ENCODE measurements at regions of chr6 and their contacts with region 1.

Region 1: GRCh38 chr6:24194978-24195700 is 69.1 kb downstream of the NRSN1 start:
- DNase-seq: peak in 1 of 2 experiments; percentile 36
- H3K4me3 ChIP-seq: no peak overlapping the region
- H3K4me3 Mint-ChIP-seq: no peak overlapping the region
- H3K27ac Mint-ChIP-seq: peak overlapping the region; percentile 82
- H3K4me1 ChIP-seq: peaks cover 35% of the 10 kb centered on the region
- H3K4me1 Mint-ChIP-seq: peaks cover 38% of the 10 kb centered on the region
- H3K27me3 ChIP-seq: no peaks in the 10 kb centered on the region
- H3K27me3 Mint-ChIP-seq: no peaks in the 10 kb centered on the region
- CTCF ChIP-seq: no peak

Region 2: GRCh38 chr6:24147511-24148149 is 47.5 kb before region 1 on chr6:
- CTCF ChIA-PET with region 1: no interaction called
- POLR2A ChIA-PET with region 1: no interaction called
- intact Hi-C with region 1: loop called (anchors 1 kb)
- DNase-seq: no peak
- H3K4me3 ChIP-seq: no peak overlapping the region
- H3K4me3 Mint-ChIP-seq: peak overlapping the region; percentile 65
- H3K27ac Mint-ChIP-seq: peak overlapping the region; percentile 95
- H3K4me1 ChIP-seq: peaks cover 40% of the 10 kb centered on the region
- H3K4me1 Mint-ChIP-seq: peaks cover 49% of the 10 kb centered on the region
- H3K27me3 ChIP-seq: no peaks in the 10 kb centered on the region
- H3K27me3 Mint-ChIP-seq: no peaks in the 10 kb centered on the region
- CTCF ChIP-seq: no peak